ENCODE measurements at regions of chr7 and their contacts with region 1.

Region 1: DNA sequence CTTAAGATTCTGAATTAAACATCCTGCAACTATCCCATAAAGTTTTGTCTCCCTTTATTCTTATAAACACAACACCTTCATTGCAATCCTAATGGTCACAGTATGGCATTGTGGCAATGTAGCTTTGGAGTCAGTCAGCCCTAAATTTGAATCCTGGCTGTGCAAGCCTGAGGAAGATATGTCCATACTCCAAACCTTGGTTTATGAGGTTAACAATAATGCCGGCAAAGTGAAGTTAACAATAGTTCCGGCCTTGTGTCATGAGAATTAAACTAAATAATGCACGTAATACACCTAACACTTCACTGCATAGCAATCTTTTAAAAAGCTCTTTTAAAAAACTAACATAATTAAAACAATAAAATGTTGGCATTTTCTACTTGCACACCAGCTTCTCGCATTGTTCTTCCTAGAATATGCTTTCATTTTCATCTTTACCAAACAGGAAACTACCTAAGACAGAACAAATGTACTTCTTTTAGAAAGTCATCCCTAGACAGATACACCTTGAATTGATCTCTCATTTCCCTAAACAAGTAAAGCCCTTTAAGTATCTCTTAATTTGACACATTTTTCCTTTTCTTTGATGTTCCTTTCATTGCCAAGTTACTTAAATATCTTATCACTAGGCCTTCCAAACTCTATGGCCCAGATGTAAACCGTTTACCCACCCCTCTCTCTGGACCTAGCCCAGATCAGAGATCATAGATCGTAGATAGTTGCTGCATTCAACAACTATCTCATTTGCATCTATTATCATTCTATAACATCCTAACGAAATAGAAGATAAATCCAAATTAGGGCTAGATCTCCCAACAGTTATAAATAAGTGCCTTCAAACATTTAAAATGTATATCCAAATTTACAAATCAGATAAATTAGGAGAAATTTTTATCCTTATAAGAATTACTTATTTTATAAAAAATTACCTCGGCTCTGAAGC is 66.7 kb downstream of the CREB3L2 start:
- DNase-seq: no peak
- H3K4me3 ChIP-seq: no peak overlapping the region
- H3K27ac ChIP-seq: peak overlapping the region; percentile 22
- H3K4me1 ChIP-seq: peaks cover 52% of the 10 kb centered on the region
- H3K27me3 ChIP-seq: no peaks in the 10 kb centered on the region
- CTCF ChIP-seq: no peak

Region 2: DNA sequence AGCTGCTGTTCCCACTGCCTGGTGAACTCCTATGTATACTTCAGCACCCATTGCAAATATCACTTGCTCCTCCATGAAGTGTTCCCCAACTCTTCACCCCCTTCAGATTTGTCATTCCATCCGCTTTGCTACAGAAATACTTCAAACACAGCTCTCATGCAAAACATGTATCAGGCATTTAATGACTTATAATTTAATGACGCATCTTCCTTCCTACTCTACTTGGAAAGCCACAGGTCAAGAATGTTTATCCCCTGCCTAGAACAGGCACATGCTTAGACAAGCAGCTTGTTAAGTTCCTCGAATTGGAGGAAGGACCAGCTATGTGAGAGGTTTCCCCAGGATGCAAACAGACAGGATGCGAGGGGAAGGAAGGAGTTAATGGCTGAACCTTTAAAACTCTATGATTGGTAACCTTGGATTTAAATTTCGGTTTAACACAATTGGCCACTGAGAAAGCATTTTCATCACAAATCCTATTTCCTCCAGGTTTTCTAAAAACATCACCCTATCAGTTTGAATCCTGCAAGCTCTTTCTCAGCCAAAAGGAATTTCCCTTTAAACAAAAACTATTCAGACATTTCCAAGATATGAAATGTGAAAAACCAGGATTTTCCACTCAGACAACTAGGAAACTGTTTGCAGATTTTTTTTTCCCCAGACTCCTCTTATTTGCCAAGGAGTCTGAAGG is 55.2 kb after region 1 on chr7:
- CTCF ChIA-PET with region 1: no interaction called
- dilution Hi-C with region 1: loop called (anchors 5 kb)
- in situ Hi-C with region 1: no loop called
- intact Hi-C with region 1: loop called (anchors 2 kb)
- DNase-seq: peak; percentile 96
- H3K4me3 ChIP-seq: peak overlapping the region in 2 of 3 experiments; percentile 7 to 11
- H3K27ac ChIP-seq: peak overlapping the region; percentile 81
- H3K4me1 ChIP-seq: peaks cover 61% of the 10 kb centered on the region
- H3K27me3 ChIP-seq: no peaks in the 10 kb centered on the region
- CTCF ChIP-seq: no peak

Region 3: GRCh38 chr7:137996378-137996851 is 61.2 kb after region 1 on chr7:
- CTCF ChIA-PET with region 1: no interaction called
- dilution Hi-C with region 1: loop called (anchors 5 kb)
- in situ Hi-C with region 1: no loop called
- intact Hi-C with region 1: loop called (anchors 1 kb)
- DNase-seq: no peak
- H3K4me3 ChIP-seq: no peak overlapping the region
- H3K27ac ChIP-seq: no peak overlapping the region
- H3K4me1 ChIP-seq: peaks cover 39% of the 10 kb centered on the region
- H3K27me3 ChIP-seq: no peaks in the 10 kb centered on the region
- CTCF ChIP-seq: no peak

Region 4: DNA sequence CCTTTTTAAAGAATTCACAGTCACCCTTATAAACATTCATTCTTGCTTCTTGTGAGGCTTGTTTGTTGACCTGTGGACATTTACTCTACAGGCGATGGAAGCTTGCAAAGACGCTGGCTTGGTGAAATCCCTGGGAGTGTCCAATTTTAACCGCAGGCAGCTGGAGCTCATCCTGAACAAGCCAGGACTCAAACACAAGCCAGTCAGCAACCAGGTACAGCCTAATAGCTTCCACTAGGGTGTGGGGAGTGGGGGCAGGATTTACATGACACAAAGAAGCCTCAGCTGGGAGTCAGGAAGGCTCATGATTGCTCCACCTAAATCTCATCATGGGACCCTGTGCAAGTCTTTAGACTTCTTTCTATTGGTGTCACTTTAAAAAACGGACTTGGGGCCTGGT is 170.0 kb after region 1 on chr7:
- CTCF ChIA-PET with region 1: no interaction called
- dilution Hi-C with region 1: no loop called
- in situ Hi-C with region 1: no loop called
- intact Hi-C with region 1: no loop called
- DNase-seq: peak; percentile 5
- H3K4me3 ChIP-seq: no peak overlapping the region
- H3K27ac ChIP-seq: no peak overlapping the region
- H3K4me1 ChIP-seq: no peaks in the 10 kb centered on the region
- H3K27me3 ChIP-seq: no peaks in the 10 kb centered on the region
- CTCF ChIP-seq: peak in 1 of 2 donors; percentile 36

Measured in mammary epithelial cell (primary cell).